Mammary epithelial cell (primary cell): ENCODE measurements at regions of chr3 and their contacts with region 1.

Region 1: DNA sequence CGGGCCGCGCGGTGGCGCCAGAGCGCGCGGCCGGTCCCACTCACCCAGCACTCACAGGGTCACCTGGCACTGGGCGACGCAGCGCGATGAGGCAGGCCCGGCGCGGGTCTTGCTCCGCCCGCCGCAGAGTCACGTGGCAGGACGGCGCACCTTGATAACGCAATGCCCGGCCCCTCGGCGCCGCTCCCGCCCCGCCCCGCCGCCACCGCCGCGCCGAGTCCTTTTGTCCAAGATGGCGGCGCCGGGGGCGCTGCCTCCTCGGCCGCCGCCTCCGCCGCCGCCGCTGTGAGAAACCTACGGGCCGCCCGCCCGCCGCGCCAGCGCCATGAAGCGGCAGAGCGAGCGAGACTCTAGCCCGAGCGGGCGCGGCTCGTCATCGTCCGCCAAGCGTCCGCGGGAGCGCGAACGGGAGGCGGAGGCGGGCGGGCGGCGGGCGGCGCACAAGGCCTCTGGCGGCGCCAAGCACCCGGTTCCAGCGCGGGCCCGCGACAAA is at the start of gene RBM15B:
- DNase-seq: peak; percentile 96
- H3K4me3 ChIP-seq: peak within 1 kb of the TSS; percentile 55 to 71 (median 59)
- H3K27ac ChIP-seq: peak within 1 kb of the TSS; percentile 33
- H3K4me1 ChIP-seq: peaks cover 54% of the 10 kb centered on the region
- H3K27me3 ChIP-seq: no peaks in the 10 kb centered on the region
- CTCF ChIP-seq: peak; percentile 62 to 92
- total RNA-seq, gene RBM15B: 33.3 to 40.8 TPM

Region 2: DNA sequence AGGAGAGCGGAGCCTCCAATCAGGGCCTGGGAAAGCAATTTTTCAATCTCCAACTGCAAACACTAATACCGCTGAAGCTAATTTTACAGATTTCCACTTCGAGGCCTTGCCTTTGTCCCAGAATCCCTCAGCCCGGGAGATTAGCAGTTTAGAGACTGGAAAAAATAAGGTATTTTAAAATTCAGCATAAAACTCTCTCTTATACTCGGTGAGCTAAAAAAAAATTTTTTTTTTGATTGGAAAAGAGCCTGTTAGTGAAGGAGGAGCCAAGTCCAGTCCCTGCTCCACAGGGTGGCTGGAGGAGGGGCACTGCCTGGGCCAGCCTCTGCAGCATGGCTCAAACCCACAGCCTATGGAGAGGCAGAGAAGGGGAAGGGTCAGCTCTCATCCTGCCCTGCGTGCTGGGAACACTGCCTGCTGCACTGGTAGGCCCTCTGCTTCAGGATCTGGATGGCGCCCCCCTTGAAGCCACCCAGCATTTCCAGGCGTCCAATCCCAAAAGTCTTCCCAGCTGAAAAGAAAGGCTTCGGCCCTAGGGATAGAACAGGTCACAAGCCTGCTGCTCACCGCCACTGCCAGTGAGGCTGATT is 936.5 kb before region 1 on chr3:
- CTCF ChIA-PET with region 1: interaction called, 14 read pairs
- dilution Hi-C with region 1: no loop called
- in situ Hi-C with region 1: no loop called
- intact Hi-C with region 1: no loop called
- DNase-seq: no peak
- H3K4me3 ChIP-seq: no peak overlapping the region
- H3K27ac ChIP-seq: no peak overlapping the region
- H3K4me1 ChIP-seq: no peaks in the 10 kb centered on the region
- H3K27me3 ChIP-seq: no peaks in the 10 kb centered on the region
- CTCF ChIP-seq: no peak

Region 3: DNA sequence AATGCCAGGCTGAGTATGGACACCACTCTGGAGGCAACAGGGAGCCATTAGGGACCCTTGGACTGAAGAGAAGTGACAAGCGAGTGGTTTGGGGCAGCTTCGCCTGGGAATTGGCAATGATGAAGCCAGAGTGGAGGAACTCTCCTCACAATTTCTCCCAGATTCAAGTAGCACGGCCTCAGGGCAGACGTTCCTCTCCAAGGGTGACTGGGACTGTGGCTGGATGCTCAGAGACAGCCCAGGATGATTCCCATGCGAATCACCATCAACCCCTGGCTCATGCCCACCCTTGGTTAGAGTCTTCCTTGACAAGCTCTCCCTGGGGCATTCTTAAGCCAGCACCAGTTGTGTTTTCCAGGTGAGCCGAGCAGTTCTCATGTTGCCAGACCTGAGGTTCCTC is 732.7 kb before region 1 on chr3:
- CTCF ChIA-PET with region 1: interaction called, 11 read pairs
- dilution Hi-C with region 1: no loop called
- in situ Hi-C with region 1: no loop called
- intact Hi-C with region 1: no loop called
- DNase-seq: peak; percentile 64
- H3K4me3 ChIP-seq: no peak overlapping the region
- H3K27ac ChIP-seq: no peak overlapping the region
- H3K4me1 ChIP-seq: peaks cover 4% of the 10 kb centered on the region
- H3K27me3 ChIP-seq: no peaks in the 10 kb centered on the region
- CTCF ChIP-seq: no peak

Region 4: DNA sequence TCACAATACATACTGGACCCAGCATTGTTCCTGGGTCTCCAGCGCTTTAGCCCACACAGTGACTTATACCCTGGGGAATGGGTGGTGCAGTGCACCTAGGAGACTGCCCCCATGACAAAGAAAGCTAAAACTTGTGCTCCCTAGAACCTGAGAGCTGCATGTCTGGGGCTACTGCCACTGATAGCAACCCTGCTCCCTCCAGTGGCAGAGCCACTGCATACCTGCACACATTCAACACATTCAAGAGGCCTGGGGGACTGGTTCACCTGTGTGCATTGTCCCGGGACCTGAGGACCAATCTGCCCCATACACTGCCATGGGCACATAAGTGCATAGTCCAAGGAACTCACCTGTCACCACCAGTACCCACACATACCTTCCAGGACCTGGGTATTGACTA is 308.8 kb before region 1 on chr3:
- CTCF ChIA-PET with region 1: no interaction called
- dilution Hi-C with region 1: no loop called
- in situ Hi-C with region 1: no loop called
- intact Hi-C with region 1: no loop called
- DNase-seq: no peak
- H3K4me3 ChIP-seq: no peak overlapping the region
- H3K27ac ChIP-seq: no peak overlapping the region
- H3K4me1 ChIP-seq: no peaks in the 10 kb centered on the region
- H3K27me3 ChIP-seq: no peaks in the 10 kb centered on the region
- CTCF ChIP-seq: no peak

Region 5: GRCh38 chr3:51257870-51258269 is 133.3 kb before region 1 on chr3:
- CTCF ChIA-PET with region 1: no interaction called
- dilution Hi-C with region 1: no loop called
- in situ Hi-C with region 1: no loop called
- intact Hi-C with region 1: no loop called
- DNase-seq: no peak
- H3K4me3 ChIP-seq: no peak overlapping the region
- H3K27ac ChIP-seq: no peak overlapping the region
- H3K4me1 ChIP-seq: no peaks in the 10 kb centered on the region
- H3K27me3 ChIP-seq: no peaks in the 10 kb centered on the region
- CTCF ChIP-seq: no peak

Region 6: DNA sequence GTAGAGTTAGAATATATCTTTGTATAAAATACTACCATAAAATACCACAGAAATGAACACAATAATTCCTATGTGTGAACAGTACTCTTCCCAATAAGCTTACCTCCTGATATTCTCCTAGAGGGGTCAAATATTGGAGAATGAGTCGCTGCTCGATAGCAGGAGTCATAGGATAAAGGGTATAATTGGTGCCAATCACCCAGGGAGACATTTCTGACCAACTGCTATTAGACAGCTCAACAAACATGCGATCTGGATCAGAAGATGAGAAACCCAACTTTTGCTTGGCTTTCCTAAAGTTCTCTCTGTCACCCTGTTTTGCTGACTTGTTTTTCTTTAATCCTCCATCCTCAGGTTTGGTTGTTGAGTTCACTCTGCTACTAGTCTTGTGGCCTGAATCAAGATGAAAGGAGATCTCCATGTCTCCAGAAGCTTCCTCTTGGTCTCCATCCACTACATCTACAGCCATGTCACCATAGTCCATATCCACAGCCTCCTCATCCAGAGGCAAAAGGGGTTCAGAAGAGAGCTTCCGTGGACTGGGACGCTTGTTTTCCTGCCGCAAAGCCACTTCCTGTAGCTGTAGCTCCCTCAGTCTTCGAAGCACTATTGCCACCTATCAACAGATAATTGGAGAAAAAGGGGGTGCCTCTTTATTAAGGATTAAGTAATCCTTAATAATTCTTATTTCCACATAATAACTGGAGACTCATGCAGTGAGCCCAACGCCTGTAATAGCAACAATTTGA is 50.3 kb after region 1 on chr3:
- CTCF ChIA-PET with region 1: no interaction called
- dilution Hi-C with region 1: loop called (anchors 5 kb)
- in situ Hi-C with region 1: no loop called
- intact Hi-C with region 1: no loop called
- DNase-seq: no peak
- H3K4me3 ChIP-seq: no peak overlapping the region
- H3K27ac ChIP-seq: no peak overlapping the region
- H3K4me1 ChIP-seq: peaks cover 4% of the 10 kb centered on the region
- H3K27me3 ChIP-seq: no peaks in the 10 kb centered on the region
- CTCF ChIP-seq: no peak

Region 7: DNA sequence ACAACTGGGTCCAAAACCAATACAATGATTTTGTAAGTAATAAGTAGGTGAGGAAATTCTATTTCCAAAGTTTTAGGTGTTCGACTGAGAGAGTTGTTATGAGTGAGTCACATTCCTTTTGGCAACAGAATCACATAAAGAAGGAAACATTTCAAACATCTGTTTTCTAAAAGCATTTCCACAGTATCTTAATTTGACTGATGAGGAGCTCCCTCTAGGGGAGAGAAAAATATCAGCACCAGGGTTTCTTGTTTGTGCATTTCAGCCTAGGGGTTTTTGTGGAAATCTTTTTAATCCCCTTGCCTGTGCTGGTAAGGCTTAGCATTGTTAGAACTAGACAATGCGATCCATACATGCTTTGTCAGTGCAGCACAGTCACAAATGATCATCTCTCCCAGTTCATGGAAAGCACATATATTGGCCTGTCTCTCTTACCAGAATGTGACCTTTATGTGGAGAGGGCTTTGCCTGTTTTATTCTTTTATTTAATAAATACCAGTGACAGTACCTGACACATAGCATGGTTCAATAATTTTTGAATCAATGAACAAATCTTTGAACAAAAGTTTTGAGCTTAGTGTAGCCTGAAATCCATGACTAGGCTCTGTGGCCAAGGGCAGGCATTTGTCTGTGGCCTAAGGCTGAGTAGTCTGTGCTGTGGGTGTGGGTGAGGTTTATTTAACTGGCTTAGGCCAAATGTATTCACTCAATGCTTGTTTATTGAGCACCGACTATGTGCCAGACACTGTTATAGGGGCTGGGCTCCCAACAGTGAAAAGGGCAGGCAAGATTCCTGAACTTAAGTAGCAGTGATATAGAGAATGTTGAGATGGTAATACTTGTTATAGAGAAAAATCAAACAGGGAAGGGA is 409.0 kb after region 1 on chr3:
- CTCF ChIA-PET with region 1: no interaction called
- dilution Hi-C with region 1: no loop called
- in situ Hi-C with region 1: no loop called
- intact Hi-C with region 1: loop called (anchors 2 kb)
- DNase-seq: peak; percentile 65
- H3K4me3 ChIP-seq: no peak overlapping the region
- H3K27ac ChIP-seq: no peak overlapping the region
- H3K4me1 ChIP-seq: peaks cover 10% of the 10 kb centered on the region
- H3K27me3 ChIP-seq: no peaks in the 10 kb centered on the region
- CTCF ChIP-seq: peak; percentile 80 to 90